Calu3 (cell line): ENCODE measurements at regions of chr10 and their contacts with region 1.

Region 1: GRCh38 chr10:34723750-34724149 is 91.3 kb downstream of the PARD3 start:
- DNase-seq: peak; percentile 43
- H3K4me3 Mint-ChIP-seq: no peak overlapping the region
- H3K27ac Mint-ChIP-seq: no peak overlapping the region
- H3K4me1 Mint-ChIP-seq: peaks cover 56% of the 10 kb centered on the region
- H3K27me3 Mint-ChIP-seq: no peaks in the 10 kb centered on the region
- CTCF ChIP-seq: peak; percentile 49

Region 2: GRCh38 chr10:34681933-34682332 is 41.8 kb before region 1 on chr10:
- CTCF ChIA-PET with region 1: interaction called, 4 read pairs
- intact Hi-C with region 1: loop called (anchors 5 kb)
- DNase-seq: no peak
- H3K4me3 Mint-ChIP-seq: no peak overlapping the region
- H3K27ac Mint-ChIP-seq: no peak overlapping the region
- H3K4me1 Mint-ChIP-seq: peaks cover 15% of the 10 kb centered on the region
- H3K27me3 Mint-ChIP-seq: no peaks in the 10 kb centered on the region
- CTCF ChIP-seq: no peak